ENCODE measurements at regions of chr16 and their contacts with region 1.

Region 1: GRCh38 chr16:82229796-82230619 is 60.0 kb upstream of the MPHOSPH6 start:
- DNase-seq: peak; percentile 39
- H3K4me3 ChIP-seq: peak overlapping the region in 1 of 2 experiments; percentile 21; a peak in 1 of 4 replicates
- H3K27ac ChIP-seq: no peak overlapping the region
- H3K4me1 ChIP-seq: no peaks in the 10 kb centered on the region
- H3K27me3 ChIP-seq: peaks cover 6% of the 10 kb centered on the region; the same call in 1 of the 2 replicates
- CTCF ChIP-seq: peak; percentile 85
- EP300 ChIP-seq: no peak
- RAD21 ChIP-seq: peak; percentile 78

Region 2: GRCh38 chr16:81891736-81892357 is 338.2 kb before region 1 on chr16:
- CTCF ChIA-PET with region 1: interaction called, 19 read pairs
- POLR2A ChIA-PET with region 1: no interaction called
- DNase-seq: no peak
- H3K4me3 ChIP-seq: no peak overlapping the region
- H3K27ac ChIP-seq: no peak overlapping the region
- H3K4me1 ChIP-seq: no peaks in the 10 kb centered on the region
- H3K27me3 ChIP-seq: no peaks in the 10 kb centered on the region; the same call in 1 of the 2 replicates
- CTCF ChIP-seq: no peak
- EP300 ChIP-seq: no peak
- RAD21 ChIP-seq: no peak

Region 3: DNA sequence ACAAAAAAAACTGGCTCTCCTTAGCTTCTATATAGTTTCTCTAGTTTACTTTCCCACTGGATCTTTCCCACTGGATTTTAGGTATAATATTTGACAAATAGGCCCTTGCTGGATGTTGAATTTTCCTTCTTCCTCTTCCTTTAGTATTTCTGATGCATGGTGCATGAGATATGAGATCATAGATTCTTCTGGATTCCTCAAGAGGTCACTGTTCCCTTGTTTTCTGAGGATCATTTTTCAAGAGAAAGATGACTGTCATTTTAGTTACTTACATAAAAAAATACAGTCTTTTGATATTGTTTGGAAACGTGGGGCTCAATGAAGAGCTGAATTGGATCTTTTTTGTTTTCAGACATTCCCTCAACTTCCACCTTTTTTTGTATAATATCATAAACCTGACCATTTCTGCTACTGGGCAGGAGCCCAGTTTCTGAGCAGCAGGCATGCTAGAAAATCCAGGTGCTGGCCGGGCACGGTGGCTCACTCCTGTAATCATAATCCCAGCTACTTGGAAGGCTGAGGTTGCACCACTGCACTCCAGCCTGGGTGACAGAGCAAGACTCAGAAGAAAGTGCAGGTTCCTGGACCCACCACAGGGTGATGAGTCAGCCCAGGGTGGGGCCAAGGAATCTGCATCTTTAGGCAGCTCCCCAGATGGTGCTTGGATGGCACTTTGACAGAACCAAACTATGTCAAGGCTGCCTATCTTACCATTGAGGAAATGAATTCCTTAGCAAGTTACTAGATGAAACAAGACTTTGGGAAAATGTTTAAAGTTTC is 289.0 kb before region 1 on chr16:
- CTCF ChIA-PET with region 1: interaction called, 44 read pairs
- POLR2A ChIA-PET with region 1: no interaction called
- DNase-seq: peak; percentile 15
- H3K4me3 ChIP-seq: no peak overlapping the region
- H3K27ac ChIP-seq: no peak overlapping the region
- H3K4me1 ChIP-seq: no peaks in the 10 kb centered on the region
- H3K27me3 ChIP-seq: no peaks in the 10 kb centered on the region
- CTCF ChIP-seq: peak; percentile 75
- EP300 ChIP-seq: no peak
- RAD21 ChIP-seq: peak; percentile 69

Region 4: GRCh38 chr16:82201931-82202330 is 28.1 kb before region 1 on chr16:
- CTCF ChIA-PET with region 1: no interaction called
- POLR2A ChIA-PET with region 1: no interaction called
- DNase-seq: no peak
- H3K4me3 ChIP-seq: no peak overlapping the region
- H3K27ac ChIP-seq: no peak overlapping the region
- H3K4me1 ChIP-seq: no peaks in the 10 kb centered on the region
- H3K27me3 ChIP-seq: no peaks in the 10 kb centered on the region
- CTCF ChIP-seq: no peak
- EP300 ChIP-seq: no peak
- RAD21 ChIP-seq: no peak

Measured in SK-N-SH (cell line).